Activated B cell treated with CpG ODN at 0.5 μM for 24 hours (primary cell): ENCODE measurements at regions of chr3 and their contacts with region 1.

Region 1: DNA sequence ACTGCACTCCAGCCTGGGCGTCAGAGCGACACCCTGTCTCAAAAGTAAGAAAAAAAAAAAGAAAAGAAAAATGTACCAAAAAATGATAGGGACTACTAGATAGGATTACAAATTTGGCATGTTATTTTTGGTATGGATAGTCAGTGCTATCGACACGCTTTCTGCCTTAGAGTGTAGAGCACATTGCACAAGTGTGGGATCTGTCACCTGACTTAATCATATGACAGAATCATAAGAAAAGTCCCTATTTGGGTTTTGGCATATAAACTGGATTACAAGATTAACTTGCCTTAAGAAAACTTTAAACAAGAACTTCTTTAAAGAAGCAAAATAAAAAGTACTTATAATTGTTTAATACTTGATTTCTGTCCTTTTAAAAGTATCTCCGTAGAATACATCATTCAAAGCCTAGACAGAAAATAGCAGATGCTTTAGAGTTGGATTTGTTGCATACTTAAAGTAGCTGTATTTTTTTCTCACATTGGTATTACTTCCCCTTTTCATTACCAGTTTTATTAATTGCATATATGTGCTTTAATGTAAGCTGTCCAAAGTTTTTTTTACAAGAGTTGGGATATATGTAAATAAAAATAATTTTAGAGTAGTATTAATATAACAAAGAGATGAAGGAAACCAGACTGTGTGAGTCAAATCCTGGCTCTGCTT is 7.8 kb downstream of the ATP6V1A start:
- DNase-seq: no peak
- ATAC-seq: peak; percentile 71
- H3K4me3 Mint-ChIP-seq: peak overlapping the region; percentile 50
- H3K27ac Mint-ChIP-seq: peak overlapping the region; percentile 53
- H3K4me1 Mint-ChIP-seq: peaks cover 30% of the 10 kb centered on the region
- H3K27me3 Mint-ChIP-seq: no peaks in the 10 kb centered on the region
- CTCF ChIP-seq: no peak

Region 2: DNA sequence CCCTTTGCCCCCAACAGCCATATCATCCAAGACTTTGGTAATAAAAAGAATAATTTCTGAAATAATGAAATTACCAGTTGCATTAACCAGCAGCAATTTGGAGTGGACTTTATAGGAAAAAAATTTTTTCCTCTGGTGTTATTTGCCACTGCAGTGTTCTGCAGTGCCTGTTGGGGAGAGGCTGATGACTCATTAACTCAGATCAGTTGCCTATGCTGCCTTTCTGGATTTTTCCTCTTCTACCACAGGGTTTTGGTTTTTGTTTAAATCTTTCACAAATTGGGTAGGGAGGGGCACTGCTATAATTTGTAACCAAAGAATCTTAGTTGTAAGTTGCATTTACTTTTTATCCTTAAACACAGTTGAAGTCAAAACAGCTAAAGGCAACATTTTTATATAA is 14.9 kb after region 1 on chr3:
- CTCF ChIA-PET with region 1: no interaction called
- POLR2A ChIA-PET with region 1: no interaction called
- intact Hi-C with region 1: loop called (anchors 2 kb)
- DNase-seq: no peak
- ATAC-seq: peak; percentile 28
- H3K4me3 Mint-ChIP-seq: no peak overlapping the region
- H3K27ac Mint-ChIP-seq: no peak overlapping the region
- H3K4me1 Mint-ChIP-seq: peaks cover 6% of the 10 kb centered on the region
- H3K27me3 Mint-ChIP-seq: no peaks in the 10 kb centered on the region
- CTCF ChIP-seq: no peak

Region 3: DNA sequence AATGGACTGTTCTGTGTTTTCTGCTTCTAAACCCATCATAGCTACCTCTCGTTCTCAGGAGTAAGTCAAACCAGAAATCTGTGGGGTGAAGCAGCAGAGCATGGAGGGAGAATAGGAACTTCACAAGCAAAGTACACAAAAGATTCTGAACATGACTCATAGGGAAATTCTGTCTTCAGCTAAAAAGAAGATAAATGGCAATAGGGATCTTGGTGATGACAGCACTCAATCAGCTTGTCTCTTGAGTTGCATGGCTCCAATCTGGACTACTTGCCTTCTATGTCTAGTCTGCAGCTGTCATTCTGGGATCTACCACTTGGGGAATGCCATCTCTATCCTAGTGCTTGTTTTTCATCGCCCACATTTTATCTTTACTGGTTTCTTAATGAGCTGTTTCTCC is 70.5 kb after region 1 on chr3:
- CTCF ChIA-PET with region 1: no interaction called
- POLR2A ChIA-PET with region 1: no interaction called
- intact Hi-C with region 1: no loop called
- DNase-seq: no peak
- ATAC-seq: peak; percentile 90
- H3K4me3 Mint-ChIP-seq: peak overlapping the region; percentile 64
- H3K27ac Mint-ChIP-seq: peak overlapping the region; percentile 71
- H3K4me1 Mint-ChIP-seq: peaks cover 43% of the 10 kb centered on the region
- H3K27me3 Mint-ChIP-seq: no peaks in the 10 kb centered on the region
- CTCF ChIP-seq: no peak

Region 4: DNA sequence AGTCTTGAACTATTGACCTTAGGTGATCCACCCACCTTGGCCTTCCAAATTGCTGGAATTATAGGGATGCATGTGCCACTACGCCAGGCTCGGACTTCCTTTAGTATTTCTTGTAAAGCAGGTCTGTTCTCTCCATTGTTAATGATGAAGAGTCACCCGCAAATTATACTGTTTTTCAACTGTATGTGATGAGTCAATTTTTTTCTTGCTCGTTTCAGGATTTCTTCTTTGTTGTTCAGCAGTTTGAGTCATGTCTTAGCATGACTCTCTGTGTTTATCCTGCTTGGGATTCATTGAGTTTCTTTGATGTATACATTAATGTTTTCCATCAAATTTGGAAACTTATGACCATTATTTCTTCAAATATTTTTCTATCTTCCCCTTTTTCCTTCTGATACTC is 112.9 kb after region 1 on chr3:
- CTCF ChIA-PET with region 1: no interaction called
- POLR2A ChIA-PET with region 1: no interaction called
- intact Hi-C with region 1: no loop called
- DNase-seq: no peak
- ATAC-seq: no peak
- H3K4me3 Mint-ChIP-seq: no peak overlapping the region
- H3K27ac Mint-ChIP-seq: no peak overlapping the region
- H3K4me1 Mint-ChIP-seq: no peaks in the 10 kb centered on the region
- H3K27me3 Mint-ChIP-seq: no peaks in the 10 kb centered on the region
- CTCF ChIP-seq: no peak